Activated CD4-positive, alpha-beta memory T cell treated with anti-CD3 and anti-CD28 coated beads, Interleukin-2, amount 10 ng/mL, durations not matched to agents 7 days and 5 days (primary cell): ENCODE measurements at regions of chr13 and their contacts with region 1.

Region 1: DNA sequence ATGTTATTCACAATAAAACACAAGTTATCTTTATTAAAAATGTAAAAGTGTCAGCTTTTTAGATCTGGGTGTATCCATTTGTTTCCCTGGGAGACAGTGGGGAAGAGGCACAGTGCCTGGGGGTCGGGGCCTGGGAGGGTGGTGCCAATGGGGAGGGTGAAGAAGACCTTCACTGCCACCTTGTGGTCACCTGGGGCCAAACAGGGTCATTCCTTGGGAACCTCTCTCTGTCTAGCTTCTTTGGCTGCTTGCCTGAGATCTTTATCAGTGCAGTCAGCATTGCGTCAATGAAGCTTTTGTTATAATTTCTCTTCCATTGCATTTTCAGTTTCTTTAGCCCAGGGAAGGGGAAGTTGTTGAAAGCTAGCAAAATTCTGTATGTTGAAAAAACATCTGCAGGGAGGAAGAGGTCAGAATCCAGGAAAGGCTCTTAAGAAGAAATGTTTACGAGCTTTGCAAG is 39.1 kb downstream of the PCDH8 start:
- DNase-seq: peak; percentile 57
- H3K4me3 Mint-ChIP-seq: no peak overlapping the region
- H3K27ac Mint-ChIP-seq: no peak overlapping the region
- H3K4me1 Mint-ChIP-seq: peaks cover 4% of the 10 kb centered on the region
- H3K27me3 Mint-ChIP-seq: peaks cover 5% of the 10 kb centered on the region

Region 2: DNA sequence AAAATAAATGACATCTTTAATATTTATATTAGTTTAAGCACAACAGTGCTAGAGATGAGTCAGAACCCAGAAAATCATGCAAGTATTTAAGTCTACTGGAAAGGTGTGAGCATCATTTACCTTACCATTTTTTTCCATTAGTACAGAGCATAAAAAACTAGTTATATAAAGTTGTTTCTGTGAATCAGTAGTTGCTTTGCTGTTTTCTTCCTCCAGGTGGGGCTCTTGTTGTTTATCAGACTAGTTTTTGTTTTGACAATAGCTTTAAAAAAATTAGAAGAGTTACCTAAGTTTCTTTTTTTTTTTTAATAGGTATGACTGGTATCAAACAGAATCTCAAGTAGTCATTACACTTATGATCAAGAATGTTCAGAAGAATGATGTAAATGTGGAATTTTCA is 144.0 kb before region 1 on chr13:
- CTCF ChIA-PET with region 1: interaction called, 18 read pairs
- POLR2A ChIA-PET with region 1: no interaction called
- DNase-seq: no peak
- H3K4me3 Mint-ChIP-seq: no peak overlapping the region
- H3K27ac Mint-ChIP-seq: no peak overlapping the region
- H3K4me1 Mint-ChIP-seq: peaks cover 1% of the 10 kb centered on the region
- H3K27me3 Mint-ChIP-seq: no peaks in the 10 kb centered on the region